Panc1 (cell line): ENCODE measurements at regions of chr17 and their contacts with region 1.

Region 1: DNA sequence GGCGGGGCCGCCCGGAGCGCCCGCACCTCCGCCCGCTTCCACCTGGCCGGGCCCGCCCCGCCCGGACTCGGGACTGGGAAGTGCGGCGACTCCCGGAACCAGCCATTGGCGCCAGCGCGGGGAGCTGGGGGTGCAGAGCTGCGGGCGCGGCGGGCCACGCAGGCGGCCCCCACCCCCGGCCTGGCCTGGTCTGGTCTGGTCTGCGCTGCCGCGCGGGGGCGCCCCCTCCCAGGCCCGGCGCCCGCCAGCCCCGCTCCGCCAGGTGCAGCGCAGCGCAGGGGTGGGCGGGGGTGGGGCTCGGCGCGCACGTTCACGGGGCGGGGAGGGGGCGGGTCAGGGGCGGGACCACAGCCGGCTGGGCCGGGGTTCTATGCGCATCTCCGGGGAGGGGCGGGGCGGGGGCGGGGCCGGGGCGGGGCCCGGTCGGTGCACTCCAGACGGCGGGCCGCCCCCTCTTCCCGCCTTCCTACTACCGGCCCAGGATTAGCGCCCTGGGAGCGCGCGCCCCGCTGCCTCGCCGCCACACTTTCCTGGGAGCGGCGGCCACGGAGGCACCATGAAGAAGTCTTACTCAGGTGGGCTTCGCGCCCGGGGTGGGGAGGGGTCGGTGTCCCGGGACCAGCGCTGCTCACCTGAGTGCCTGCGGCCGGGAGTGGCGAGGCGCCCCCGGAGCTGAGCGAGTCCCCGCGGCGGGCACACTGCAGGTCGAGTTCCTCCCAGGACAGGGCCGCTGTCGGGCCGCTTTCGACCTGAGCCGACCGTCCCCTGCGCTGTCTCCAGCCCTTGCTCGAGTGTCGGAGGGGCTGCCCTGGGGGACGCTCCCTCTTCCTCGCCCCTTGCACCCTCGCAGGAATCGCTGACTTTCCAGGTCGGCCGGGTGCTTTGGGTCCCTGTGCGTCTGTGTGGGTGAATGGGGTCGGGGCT is 140.5 kb downstream of the SEC14L1 start:
- DNase-seq: no peak
- ATAC-seq: peak; percentile 82
- H3K4me3 ChIP-seq: peak overlapping the region; percentile 92 to 98
- H3K27ac ChIP-seq: peak overlapping the region; percentile 100
- H3K4me1 ChIP-seq: peaks cover 45% of the 10 kb centered on the region
- H3K27me3 ChIP-seq: no peaks in the 10 kb centered on the region
- CTCF ChIP-seq: peak; percentile 95; the same call in 1 of the 2 replicates

Region 2: DNA sequence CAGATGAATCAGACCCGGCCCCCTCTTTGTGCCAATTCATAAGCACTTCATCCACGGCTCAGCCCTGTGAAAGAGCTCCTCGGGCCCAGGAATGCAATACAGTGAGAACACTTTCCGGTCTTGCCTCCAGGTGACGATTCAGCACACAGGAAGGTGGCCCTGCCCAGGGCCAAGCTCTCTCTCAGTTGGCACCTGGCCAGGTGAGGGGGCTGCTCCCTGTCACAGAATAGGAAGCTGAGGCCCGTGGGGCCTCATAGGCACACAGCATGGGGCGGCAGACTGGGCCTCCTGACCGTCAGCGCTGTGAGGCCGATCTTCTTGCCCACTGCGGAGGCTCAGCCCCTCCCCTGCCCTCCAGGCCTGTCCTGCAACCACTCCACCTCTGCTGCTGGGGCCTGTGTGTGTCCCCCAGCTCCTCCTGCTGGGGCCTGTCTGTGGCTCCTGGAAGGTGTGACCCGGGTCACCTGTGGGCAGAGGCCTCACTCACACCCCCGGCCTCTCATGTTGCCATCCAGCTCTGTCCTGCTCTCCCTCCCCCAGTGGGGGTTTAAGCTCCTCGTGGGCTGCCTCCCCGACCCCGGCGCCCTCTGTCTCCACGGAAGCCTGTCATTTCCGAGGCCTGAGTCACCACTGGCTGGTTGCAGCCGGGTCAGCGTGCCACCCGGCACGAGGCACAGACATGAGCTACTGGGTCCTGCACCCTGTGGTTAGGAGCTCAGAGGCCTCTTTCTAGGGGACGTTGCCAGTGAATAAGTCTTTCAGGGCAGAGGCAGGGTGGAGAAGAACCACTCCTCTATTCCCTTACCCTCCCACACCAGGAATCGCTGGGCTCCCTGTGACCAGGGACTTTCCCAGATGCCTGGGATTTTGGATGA is 26.1 kb before region 1 on chr17:
- CTCF ChIA-PET with region 1: interaction called, 3 read pairs
- POLR2A ChIA-PET with region 1: interaction called, 13 read pairs
- in situ Hi-C with region 1: no loop called
- intact Hi-C with region 1: no loop called
- DNase-seq: peak; percentile 75
- ATAC-seq: peak; percentile 90
- H3K4me3 ChIP-seq: peak overlapping the region in 1 of 2 experiments; percentile 20; a peak in 2 of 4 replicates
- H3K27ac ChIP-seq: peak overlapping the region; percentile 97
- H3K4me1 ChIP-seq: peaks cover 38% of the 10 kb centered on the region
- H3K27me3 ChIP-seq: no peaks in the 10 kb centered on the region
- CTCF ChIP-seq: no peak

Region 3: GRCh38 chr17:77319211-77320043 is 38.2 kb after region 1 on chr17:
- CTCF ChIA-PET with region 1: interaction called, 3 read pairs
- POLR2A ChIA-PET with region 1: interaction called, 6 read pairs
- in situ Hi-C with region 1: no loop called
- intact Hi-C with region 1: loop called (anchors 5 kb)
- DNase-seq: no peak
- ATAC-seq: peak; percentile 68
- H3K4me3 ChIP-seq: peak overlapping the region; percentile 70 to 92
- H3K27ac ChIP-seq: peak overlapping the region; percentile 99
- H3K4me1 ChIP-seq: peaks cover 76% of the 10 kb centered on the region
- H3K27me3 ChIP-seq: no peaks in the 10 kb centered on the region
- CTCF ChIP-seq: no peak

Region 4: GRCh38 chr17:77516902-77517301 is 235.7 kb after region 1 on chr17:
- CTCF ChIA-PET with region 1: no interaction called
- POLR2A ChIA-PET with region 1: no interaction called
- in situ Hi-C with region 1: no loop called
- intact Hi-C with region 1: no loop called
- DNase-seq: no peak
- ATAC-seq: peak; percentile 60; the same call in 1 of the 2 replicates
- H3K4me3 ChIP-seq: no peak overlapping the region
- H3K27ac ChIP-seq: no peak overlapping the region
- H3K4me1 ChIP-seq: no peaks in the 10 kb centered on the region
- H3K27me3 ChIP-seq: no peaks in the 10 kb centered on the region
- CTCF ChIP-seq: no peak